ENCODE measurements at regions of chr11 and their contacts with region 1.

Region 1: GRCh38 chr11:83156150-83156995 is 558 bp upstream of the PCF11 start:
- DNase-seq: peak; percentile 99
- H3K4me3 Mint-ChIP-seq: peak overlapping the region; percentile 98
- H3K27ac Mint-ChIP-seq: peak overlapping the region; percentile 100
- H3K4me1 Mint-ChIP-seq: peaks cover 26% of the 10 kb centered on the region
- H3K27me3 Mint-ChIP-seq: no peaks in the 10 kb centered on the region

Region 2: DNA sequence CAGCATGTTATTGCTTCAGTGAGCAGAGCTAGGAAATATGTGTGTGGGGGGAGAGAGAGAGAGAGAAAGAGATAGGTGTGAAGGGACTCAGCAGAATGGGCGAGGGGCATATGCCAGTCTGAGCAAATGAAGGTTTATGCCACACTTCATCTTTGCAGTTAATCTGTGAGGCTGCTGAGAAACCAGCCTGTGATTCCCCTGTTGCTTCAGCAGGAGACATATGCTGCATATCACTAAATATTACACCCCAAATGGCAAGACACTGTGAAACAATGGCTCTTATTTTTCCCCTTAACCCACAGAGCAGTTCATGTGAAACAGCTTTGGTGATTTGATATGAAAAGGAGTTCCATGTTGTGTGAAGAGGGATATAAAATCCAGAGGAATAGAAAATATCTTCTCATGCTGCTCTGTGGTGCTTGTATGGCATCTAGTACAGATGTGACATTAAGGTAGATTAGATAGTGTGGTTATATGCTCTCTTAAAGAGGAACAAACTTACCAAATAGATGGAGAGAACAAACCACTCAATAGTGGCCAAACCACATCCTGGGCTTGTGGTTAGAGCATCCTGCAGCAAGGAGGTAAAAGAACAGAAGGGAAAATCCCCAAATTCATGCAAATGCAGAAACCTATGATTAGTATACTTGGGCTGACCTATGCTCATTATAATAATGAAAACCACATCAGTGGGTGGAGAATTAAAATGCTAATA is 1286.9 kb before region 1 on chr11:
- CTCF ChIA-PET with region 1: no interaction called
- intact Hi-C with region 1: loop called (anchors 5 kb)
- DNase-seq: peak; percentile 99
- H3K4me3 Mint-ChIP-seq: peak overlapping the region; percentile 74
- H3K27ac Mint-ChIP-seq: peak overlapping the region; percentile 92
- H3K4me1 Mint-ChIP-seq: peaks cover 46% of the 10 kb centered on the region
- H3K27me3 Mint-ChIP-seq: no peaks in the 10 kb centered on the region

Region 3: GRCh38 chr11:82864268-82864667 is 292.1 kb before region 1 on chr11:
- CTCF ChIA-PET with region 1: no interaction called
- intact Hi-C with region 1: no loop called
- DNase-seq: peak; percentile 53
- H3K4me3 Mint-ChIP-seq: no peak overlapping the region
- H3K27ac Mint-ChIP-seq: no peak overlapping the region
- H3K4me1 Mint-ChIP-seq: peaks cover 9% of the 10 kb centered on the region
- H3K27me3 Mint-ChIP-seq: no peaks in the 10 kb centered on the region

Region 4: DNA sequence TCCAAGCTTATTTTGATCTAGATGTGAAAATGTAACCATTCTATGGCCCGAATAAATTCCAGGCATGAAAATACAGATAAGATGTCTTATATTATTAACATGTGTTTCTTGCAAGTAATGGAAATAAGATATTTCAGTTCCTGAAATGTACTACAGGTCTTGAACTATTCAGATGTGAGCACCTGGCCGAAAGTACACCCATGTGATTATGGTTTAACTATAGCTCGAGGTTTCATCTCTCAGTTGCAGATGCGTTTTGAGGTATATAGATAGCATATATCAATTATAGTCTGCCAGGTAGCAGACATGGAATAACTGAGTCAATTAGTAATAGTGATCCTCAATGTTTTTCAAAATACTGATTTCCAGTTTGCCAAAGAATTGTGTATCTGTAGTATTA is 186.6 kb before region 1 on chr11:
- CTCF ChIA-PET with region 1: no interaction called
- intact Hi-C with region 1: loop called (anchors 1 kb)
- DNase-seq: peak; percentile 41
- H3K4me3 Mint-ChIP-seq: peak overlapping the region; percentile 47
- H3K27ac Mint-ChIP-seq: peak overlapping the region; percentile 59
- H3K4me1 Mint-ChIP-seq: peaks cover 50% of the 10 kb centered on the region
- H3K27me3 Mint-ChIP-seq: no peaks in the 10 kb centered on the region

Region 5: GRCh38 chr11:82996966-82997606 is 159.3 kb before region 1 on chr11:
- CTCF ChIA-PET with region 1: no interaction called
- intact Hi-C with region 1: loop called (anchors 2 kb)
- DNase-seq: peak; percentile 46
- H3K4me3 Mint-ChIP-seq: no peak overlapping the region
- H3K27ac Mint-ChIP-seq: peak overlapping the region; percentile 12
- H3K4me1 Mint-ChIP-seq: peaks cover 78% of the 10 kb centered on the region
- H3K27me3 Mint-ChIP-seq: no peaks in the 10 kb centered on the region

Region 6: GRCh38 chr11:83193315-83194280 is 37.2 kb after region 1 on chr11 and contains the start of gene ANKRD42:
- CTCF ChIA-PET with region 1: interaction called, 3 read pairs
- intact Hi-C with region 1: loop called (anchors 1 kb)
- DNase-seq: peak; percentile 90
- H3K4me3 Mint-ChIP-seq: peak within 1 kb of the TSS; percentile 95
- H3K27ac Mint-ChIP-seq: peak within 1 kb of the TSS; percentile 95
- H3K4me1 Mint-ChIP-seq: peaks cover 44% of the 10 kb centered on the region
- H3K27me3 Mint-ChIP-seq: no peaks in the 10 kb centered on the region
- total RNA-seq, gene ANKRD42: 2.3 to 2.7 TPM

Measured in activated naive CD4-positive, alpha-beta T cell treated with anti-CD3 and anti-CD28 coated beads for 36 hours (primary cell).